Left cardiac atrium (tissue), 4 donors: ENCODE measurements at regions of chr1 and their contacts with region 1.

Region 1: GRCh38 chr1:68232354-68233148 is at the start of gene WLS:
- DNase-seq: peak; percentile 83
- ATAC-seq: peak; percentile 90 to 93
- total RNA-seq, gene WLS: 92.2 to 92.8 TPM

Region 2: GRCh38 chr1:68120136-68120791 is 112.3 kb before region 1 on chr1:
- intact Hi-C with region 1: loop called in 1 of 2 experiments (anchors 5 kb)
- DNase-seq: no peak
- ATAC-seq: peak; percentile 62 to 70

Region 3: GRCh38 chr1:68145418-68146126 is 87.0 kb before region 1 on chr1:
- intact Hi-C with region 1: loop called in 1 of 2 experiments (anchors 5 kb)
- DNase-seq: no peak
- ATAC-seq: peak in 1 of 2 donors; percentile 15

Region 4: GRCh38 chr1:68173911-68174737 is 58.4 kb before region 1 on chr1:
- intact Hi-C with region 1: loop called in 1 of 2 experiments (anchors 5 kb)
- DNase-seq: peak; percentile 71
- ATAC-seq: peak; percentile 79 to 87

Region 5: GRCh38 chr1:68321084-68321685 is 88.6 kb after region 1 on chr1:
- intact Hi-C with region 1: loop called in 1 of 2 experiments (anchors 5 kb)
- DNase-seq: peak; percentile 74
- ATAC-seq: peak; percentile 94 to 96